ENCODE measurements at regions of chr9 and their contacts with region 1.

Region 1: DNA sequence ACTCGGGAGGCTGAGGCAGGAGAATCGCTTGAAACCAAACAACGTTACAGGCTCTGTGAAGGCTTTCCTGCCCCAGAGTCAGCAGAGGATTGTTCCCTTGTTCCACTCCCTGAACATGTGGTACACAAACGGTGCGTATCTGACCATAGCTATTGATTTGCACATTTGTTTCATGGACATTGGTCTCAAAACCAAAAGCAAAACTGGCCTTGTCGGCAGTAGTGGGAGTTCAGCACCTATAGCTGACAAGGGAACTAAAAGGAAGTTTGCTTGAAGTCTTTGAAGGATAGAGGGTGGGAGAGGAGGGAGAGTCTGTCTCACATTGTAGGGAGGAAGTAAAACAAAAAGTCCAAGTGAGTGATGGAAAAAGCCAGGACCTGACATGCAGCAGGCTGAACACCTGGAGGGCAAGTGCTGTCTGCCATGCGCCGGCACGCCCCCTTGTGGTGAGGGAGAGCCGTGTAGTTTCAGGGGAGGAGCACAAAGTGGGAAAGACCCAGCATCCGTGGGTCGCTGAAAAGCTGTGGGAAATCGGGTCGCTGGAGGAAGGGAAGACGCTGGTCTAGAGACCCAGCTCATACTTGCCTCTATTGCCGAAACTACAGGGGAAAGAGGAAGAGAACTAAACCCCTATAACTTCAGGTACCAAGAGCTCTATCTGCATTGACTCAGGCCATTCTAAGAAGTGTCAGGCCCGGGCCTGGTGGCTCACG is 58.0 kb downstream of the RAD23B start:
- DNase-seq: peak; percentile 81 to 89
- ATAC-seq: peak; percentile 59 to 77 (median 69)
- H3K4me3 ChIP-seq: no peak overlapping the region
- H3K27ac ChIP-seq: no peak overlapping the region
- H3K4me1 ChIP-seq: peaks cover 29% of the 10 kb centered on the region
- H3K27me3 ChIP-seq: no peaks in the 10 kb centered on the region
- CTCF ChIP-seq: peak; percentile 90

Region 2: DNA sequence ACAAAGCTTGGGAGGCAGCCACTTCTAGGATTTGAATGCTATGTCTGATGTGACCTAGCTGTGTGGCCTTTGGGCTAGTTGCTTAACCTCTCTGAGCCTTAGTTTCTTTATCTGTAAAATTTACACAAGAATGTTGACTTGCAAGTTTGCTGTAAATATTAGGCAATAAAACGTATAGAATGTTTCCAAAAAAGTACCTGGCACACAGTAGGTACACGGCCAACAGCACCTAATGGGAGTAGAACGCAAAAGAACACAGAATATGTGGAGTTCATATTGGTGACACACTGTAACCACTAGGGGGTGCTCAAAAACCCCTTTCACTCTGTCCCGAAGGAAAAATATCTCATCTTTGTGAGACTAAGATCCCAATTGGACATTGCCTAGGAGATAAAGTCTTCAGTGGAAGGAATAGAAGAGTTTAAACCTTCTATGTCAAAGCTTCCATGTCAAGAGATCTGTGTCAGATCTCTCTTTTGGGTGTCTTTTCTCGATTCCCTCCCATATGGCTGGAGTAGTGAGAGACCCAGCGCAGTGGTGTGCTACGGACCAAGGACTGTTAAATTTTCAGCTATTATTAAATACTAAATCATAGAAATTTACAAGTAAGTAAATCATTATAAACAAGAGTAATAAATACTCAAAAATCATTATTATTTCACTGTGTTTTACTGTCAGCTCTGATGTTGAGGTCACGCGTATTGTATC is 203.4 kb before region 1 on chr9:
- intact Hi-C with region 1: loop called in 1 of 2 experiments (anchors 5 kb)
- DNase-seq: no peak
- ATAC-seq: peak; percentile 65 to 77 (median 70)
- H3K4me3 ChIP-seq: peak overlapping the region; percentile 15
- H3K27ac ChIP-seq: peak overlapping the region; percentile 30
- H3K4me1 ChIP-seq: peaks cover 16% of the 10 kb centered on the region
- H3K27me3 ChIP-seq: no peaks in the 10 kb centered on the region
- CTCF ChIP-seq: peak; percentile 65

Region 3: GRCh38 chr9:107239474-107239873 is 101.6 kb before region 1 on chr9:
- intact Hi-C with region 1: loop called (anchors 2 to 5 kb)
- DNase-seq: no peak
- ATAC-seq: peak; percentile 51 to 86 (median 58)
- H3K4me3 ChIP-seq: no peak overlapping the region
- H3K27ac ChIP-seq: no peak overlapping the region
- H3K4me1 ChIP-seq: peaks cover 7% of the 10 kb centered on the region
- H3K27me3 ChIP-seq: peaks cover 0 to 2% (median 0%) of the 10 kb centered on the region in 3 donors
- CTCF ChIP-seq: peak; percentile 46

Region 4: GRCh38 chr9:107282753-107283625 is 58.1 kb before region 1 on chr9 and contains the start of gene RAD23B:
- intact Hi-C with region 1: loop called (anchors 5 to 10 kb)
- DNase-seq: peak; percentile 99 to 100
- ATAC-seq: peak; percentile 92 to 96 (median 94)
- H3K4me3 ChIP-seq: peak within 1 kb of the TSS; percentile 94
- H3K27ac ChIP-seq: peak within 1 kb of the TSS; percentile 100
- H3K4me1 ChIP-seq: peaks cover 24% of the 10 kb centered on the region
- H3K27me3 ChIP-seq: no peaks in the 10 kb centered on the region
- CTCF ChIP-seq: no peak
- total RNA-seq, gene RAD23B: 175 to 258 (median 233) TPM